Gastrocnemius medialis (tissue), 4 donors: ENCODE measurements at regions of chr5 and their contacts with region 1.

Region 1: GRCh38 chr5:42784132-42784531 is 27.5 kb downstream of the CCDC152 start:
- DNase-seq: no peak
- ATAC-seq: no peak
- H3K4me3 ChIP-seq: no peak overlapping the region
- H3K27ac ChIP-seq: no peak overlapping the region
- H3K4me1 ChIP-seq: no peaks in the 10 kb centered on the region
- H3K27me3 ChIP-seq: no peaks in the 10 kb centered on the region
- CTCF ChIP-seq: no peak
- POLR2A ChIP-seq: no peak

Region 2: DNA sequence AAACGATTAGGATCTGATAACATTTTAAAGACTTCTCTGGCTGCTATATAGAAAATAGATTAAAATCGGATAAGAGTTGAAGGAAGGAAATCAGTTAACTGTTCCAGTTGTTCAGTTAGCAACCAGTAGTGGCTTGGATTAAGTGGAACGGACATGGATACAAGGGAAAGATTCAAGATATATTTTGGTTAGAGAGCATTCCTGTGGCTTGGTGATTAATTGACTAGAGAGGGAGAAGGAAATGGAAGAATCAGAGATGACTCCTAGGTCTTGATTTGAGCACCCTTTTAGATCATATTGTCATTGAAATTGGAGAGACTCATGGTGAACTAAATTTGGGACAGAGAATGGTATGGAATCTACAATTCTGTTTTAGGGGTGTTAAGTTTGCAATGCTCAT is 763.0 kb before region 1 on chr5:
- in situ Hi-C with region 1: no loop called
- intact Hi-C with region 1: loop called (anchors 10 kb)
- DNase-seq: no peak
- ATAC-seq: no peak
- H3K4me3 ChIP-seq: no peak overlapping the region
- H3K27ac ChIP-seq: no peak overlapping the region
- H3K4me1 ChIP-seq: no peaks in the 10 kb centered on the region
- H3K27me3 ChIP-seq: no peaks in the 10 kb centered on the region
- CTCF ChIP-seq: no peak
- POLR2A ChIP-seq: no peak